Kidney (tissue), 22 donors: ENCODE measurements at regions of chr10 and their contacts with region 1.

Region 1: GRCh38 chr10:101214446-101215396 is 14.5 kb downstream of the LBX1 start:
- DNase-seq: peak in 4 of 5 donors; percentile 86 to 90 (median 87)
- H3K4me3 ChIP-seq: no peak overlapping the region
- H3K27ac ChIP-seq: no peak overlapping the region
- H3K4me1 ChIP-seq: peaks cover 0 to 9% (median 0%) of the 10 kb centered on the region in 3 donors
- H3K27me3 ChIP-seq: peaks cover 49% of the 10 kb centered on the region
- CTCF ChIP-seq: peak; percentile 68

Region 2: DNA sequence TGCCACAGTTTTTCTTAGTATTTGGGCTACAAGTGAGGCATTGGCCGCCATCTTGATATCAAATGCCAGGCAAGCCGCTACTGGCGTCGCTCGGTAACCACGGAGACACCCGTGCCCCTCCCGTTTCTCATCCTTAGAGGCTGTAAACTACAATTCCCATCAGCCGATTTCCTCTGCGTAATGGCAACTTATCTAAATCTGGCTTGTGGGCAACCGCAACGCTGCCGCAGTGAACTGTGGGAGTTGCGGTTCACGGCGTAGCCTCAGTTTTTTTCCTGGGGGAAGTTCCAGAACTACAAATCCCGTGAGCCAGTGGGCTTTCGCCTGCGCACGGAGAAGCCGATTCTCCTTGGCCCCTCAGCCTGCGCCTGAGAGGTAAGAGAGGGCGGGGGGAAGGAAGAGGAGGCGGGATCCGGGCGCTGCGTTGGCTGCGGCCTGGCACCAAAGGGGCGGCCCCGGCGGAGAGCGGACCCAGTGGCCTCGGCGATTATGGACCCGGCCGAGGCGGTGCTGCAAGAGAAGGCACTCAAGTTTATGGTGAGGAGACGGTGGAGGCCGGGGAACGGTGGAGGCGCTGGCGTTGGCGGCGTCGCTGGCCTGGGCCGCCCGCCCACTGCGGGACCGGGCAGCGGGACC is 139.1 kb after region 1 on chr10 and contains the start of gene BTRC:
- intact Hi-C with region 1: no loop called
- DNase-seq: peak; percentile 98 to 100 (median 99)
- H3K4me3 ChIP-seq: peak within 1 kb of the TSS; percentile 82 to 93 (median 90)
- H3K27ac ChIP-seq: peak within 1 kb of the TSS; percentile 82 to 84
- H3K4me1 ChIP-seq: peaks cover 0 to 13% (median 5%) of the 10 kb centered on the region in 3 donors
- H3K27me3 ChIP-seq: no peaks in the 10 kb centered on the region
- CTCF ChIP-seq: no peak
- total RNA-seq, gene BTRC: 18.0 TPM

Region 3: GRCh38 chr10:101569838-101570766 is 355.4 kb after region 1 on chr10:
- intact Hi-C with region 1: loop called (anchors 10 kb)
- DNase-seq: peak; percentile 74 to 92 (median 82)
- H3K4me3 ChIP-seq: peak overlapping the region; percentile 47 to 64 (median 50)
- H3K27ac ChIP-seq: no peak overlapping the region
- H3K4me1 ChIP-seq: peaks cover 0 to 18% (median 6%) of the 10 kb centered on the region in 3 donors
- H3K27me3 ChIP-seq: peaks cover 4% of the 10 kb centered on the region
- CTCF ChIP-seq: peak; percentile 93